Dorsolateral prefrontal cortex (tissue), 120 donors: ENCODE measurements at regions of chr7 and their contacts with region 1.

Region 1: DNA sequence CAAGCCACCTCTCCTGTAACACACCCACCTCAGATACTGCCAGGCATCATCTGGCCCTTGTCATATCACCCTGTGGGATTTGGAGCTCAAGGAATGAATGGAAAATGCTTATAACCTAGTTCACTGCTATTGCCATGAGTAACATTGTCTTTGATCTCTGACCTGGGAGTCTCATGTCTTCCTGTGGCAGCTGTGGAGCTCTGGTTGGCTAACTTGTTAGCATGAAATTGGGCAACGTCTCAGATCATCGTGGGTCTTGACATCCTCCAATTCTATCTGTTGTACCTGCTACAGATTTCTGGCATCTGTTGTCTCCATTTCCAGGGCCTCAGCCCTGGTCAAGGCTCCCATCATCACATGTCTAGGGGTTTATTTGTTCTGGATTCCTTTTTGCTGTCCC is 2.2 kb upstream of the TMEM270 start:
- DNase-seq: no peak
- H3K4me3 ChIP-seq: no peak overlapping the region
- H3K27ac ChIP-seq: no peak overlapping the region
- H3K27me3 ChIP-seq: peaks cover 0 to 3% (median 0%) of the 10 kb centered on the region in 45 donors
- CTCF ChIP-seq: no peak

Region 2: DNA sequence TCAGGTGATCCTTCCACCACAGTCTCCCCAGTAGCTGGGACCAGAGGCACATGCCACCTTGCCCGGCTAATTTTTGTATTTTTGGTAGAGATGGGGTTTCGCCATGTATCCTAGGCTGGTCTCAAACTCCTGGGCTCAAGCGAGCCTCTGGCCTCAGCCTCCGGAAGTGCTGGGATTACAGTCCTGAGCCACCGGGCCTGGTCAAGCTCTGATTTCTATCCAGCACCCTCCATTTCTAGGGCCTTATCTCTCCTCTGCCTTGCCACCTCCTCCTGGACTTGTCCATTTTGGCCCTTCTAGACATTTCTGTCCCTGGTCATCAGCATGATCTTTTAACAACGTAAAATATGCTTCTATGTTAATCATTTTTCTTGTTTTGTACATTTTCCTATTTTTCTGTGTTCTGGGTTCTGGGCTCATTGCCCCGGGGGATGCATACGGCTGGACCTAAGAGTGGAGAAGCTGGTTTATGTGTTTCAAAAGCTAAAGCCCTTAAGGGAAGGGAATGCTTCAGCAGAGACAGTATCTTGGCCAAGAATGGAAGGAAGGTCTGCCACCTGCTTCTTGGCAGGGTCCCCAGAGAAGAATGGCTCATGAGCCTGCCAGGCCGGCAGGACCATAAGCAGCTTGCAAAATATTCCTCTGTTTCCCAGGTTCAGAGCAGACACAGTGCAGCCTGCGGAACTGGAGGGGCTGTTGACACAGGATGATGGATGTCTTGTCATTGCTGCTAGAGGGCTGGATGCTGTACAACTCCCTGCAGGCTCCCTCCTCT is 112.6 kb before region 1 on chr7:
- intact Hi-C with region 1: no loop called
- DNase-seq: peak in 2 of 10 donors; percentile 47 to 87
- H3K4me3 ChIP-seq: no peak overlapping the region
- H3K27ac ChIP-seq: peak overlapping the region in 12 of 59 donors; percentile 1 to 75 (median 41)
- H3K27me3 ChIP-seq: no peaks in the 10 kb centered on the region
- CTCF ChIP-seq: no peak

Region 3: DNA sequence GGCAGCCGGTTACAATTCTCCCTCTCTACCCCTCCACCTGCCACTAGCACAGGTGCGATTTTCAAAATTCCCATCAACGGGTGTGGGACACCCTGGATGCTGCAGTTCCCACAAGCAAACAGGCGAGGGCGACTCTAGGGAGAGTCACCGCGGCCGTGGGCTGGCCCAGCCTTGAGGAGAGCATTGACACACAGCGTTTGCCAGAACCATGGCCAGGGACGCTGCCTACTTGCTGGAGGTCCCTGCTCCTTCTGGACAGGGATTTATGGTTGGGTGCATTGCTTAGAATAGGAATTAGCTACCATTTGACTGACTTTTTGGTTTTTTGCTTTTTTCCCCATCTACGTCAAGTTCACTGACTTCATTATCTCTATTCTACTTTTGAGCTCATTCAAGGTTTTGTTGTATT is 47.0 kb before region 1 on chr7:
- intact Hi-C with region 1: loop called in 1 of 2 experiments (anchors 5 kb)
- DNase-seq: peak in 5 of 10 donors; percentile 34 to 53 (median 39)
- H3K4me3 ChIP-seq: no peak overlapping the region
- H3K27ac ChIP-seq: no peak overlapping the region
- H3K27me3 ChIP-seq: peaks cover 0 to 13% (median 0%) of the 10 kb centered on the region in 45 donors
- CTCF ChIP-seq: peak in 54 of 56 donors; percentile 23 to 75 (median 58)